Dorsolateral prefrontal cortex (tissue), 120 donors: ENCODE measurements at regions of chr7 and their contacts with region 1.

Region 1: DNA sequence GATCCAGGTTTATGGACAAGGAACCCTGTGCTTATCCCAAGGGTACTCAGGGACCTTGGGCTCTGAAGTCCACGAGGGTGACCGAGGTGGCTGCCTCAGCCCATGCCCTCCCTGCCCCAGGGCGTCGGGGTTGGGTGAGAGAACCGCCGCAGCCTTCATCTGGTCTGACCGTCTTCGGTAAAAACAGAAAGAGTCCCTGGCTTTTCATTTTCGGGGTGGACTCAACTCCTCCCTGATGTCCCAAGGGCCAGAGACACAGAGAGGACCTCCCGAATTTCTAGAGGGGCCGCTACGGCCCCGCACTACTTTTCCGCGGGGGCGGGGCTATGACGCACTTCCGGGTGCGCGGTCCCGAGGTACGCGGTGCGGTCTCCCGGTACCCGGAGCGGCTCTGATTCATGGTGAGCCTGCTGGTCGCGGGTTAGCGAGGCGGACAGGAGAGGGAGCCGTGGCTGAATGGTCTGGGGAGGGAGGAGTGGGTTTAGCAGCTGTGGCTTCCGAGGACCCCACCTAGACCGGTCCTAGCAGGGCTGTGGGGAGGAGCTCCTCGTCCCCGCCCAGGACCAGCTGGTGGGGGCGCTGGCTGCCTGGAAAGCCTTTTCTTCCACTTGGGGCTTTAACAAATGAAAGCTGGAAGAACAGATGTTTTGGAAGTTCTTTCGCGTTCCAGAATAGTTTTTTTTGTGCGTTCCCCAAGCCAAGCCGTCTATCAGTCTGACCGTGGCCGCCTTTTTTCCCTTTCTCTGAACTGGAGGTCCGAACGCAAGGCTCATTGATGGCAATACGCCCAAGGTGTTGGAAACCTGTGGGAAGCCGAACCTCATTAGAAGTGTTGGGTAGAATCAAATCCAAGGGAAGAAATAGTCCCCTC is at the start of gene ZSCAN21:
- DNase-seq: peak; percentile 79 to 92 (median 86)
- H3K4me3 ChIP-seq: peak within 1 kb of the TSS; percentile 58 to 99 (median 85)
- H3K27ac ChIP-seq: peak within 1 kb of the TSS; percentile 86 to 99 (median 97)
- H3K27me3 ChIP-seq: no peaks in the 10 kb centered on the region
- CTCF ChIP-seq: peak in 49 of 56 donors; percentile 20 to 70 (median 47)
- total RNA-seq, gene ZSCAN21: 8.2 to 18.7 (median 13.4) TPM

Region 2: DNA sequence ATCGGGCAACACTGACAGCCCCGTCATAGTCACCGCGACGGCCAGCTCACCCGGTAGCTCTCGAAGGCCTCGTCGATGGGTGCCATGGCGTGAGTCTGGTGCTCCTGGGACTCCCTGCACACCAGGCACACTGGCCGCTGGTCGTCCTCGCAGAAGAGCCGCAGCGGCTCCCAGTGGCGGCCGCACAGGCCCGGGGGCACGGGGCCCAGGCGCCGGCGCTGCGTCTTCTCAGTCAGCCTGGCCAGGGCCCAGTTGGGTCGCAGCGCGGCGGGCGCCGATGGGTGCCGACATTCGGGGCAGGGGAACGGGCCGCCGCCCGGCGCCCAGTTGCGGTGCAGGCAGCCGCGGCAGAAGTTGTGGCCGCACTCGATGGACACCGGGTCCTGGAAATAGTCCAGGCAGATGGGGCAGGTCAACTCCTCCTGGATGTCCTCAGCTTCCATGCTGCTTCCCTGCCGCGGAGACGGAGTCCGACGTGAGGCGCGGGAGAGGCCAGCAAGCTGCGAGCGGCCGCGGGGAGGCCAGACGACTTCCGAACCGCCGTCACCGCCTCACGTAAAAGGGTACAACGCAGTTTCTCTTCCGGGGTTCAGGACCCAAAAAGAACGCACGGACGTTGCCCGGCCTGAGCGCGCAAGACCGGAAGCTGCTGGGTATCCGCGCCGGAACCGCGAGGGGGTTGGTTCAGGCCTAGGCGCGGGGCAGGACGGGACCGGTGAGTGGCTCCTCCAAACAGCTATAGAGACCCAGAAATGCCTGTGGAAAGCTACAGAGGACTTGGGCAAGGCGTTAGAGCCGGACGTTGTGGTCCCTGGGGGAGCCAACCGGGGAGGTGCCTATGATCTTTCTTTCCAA is 130.5 kb before region 1 on chr7 and contains the start of gene TRIM4:
- intact Hi-C with region 1: loop called (anchors 5 to 10 kb)
- DNase-seq: peak; percentile 82 to 95 (median 88)
- H3K4me3 ChIP-seq: peak within 1 kb of the TSS; percentile 64 to 100 (median 93)
- H3K27ac ChIP-seq: peak within 1 kb of the TSS; percentile 26 to 93 (median 83)
- H3K27me3 ChIP-seq: no peaks in the 10 kb centered on the region
- CTCF ChIP-seq: peak in 35 of 56 donors; percentile 3 to 56 (median 29)
- total RNA-seq, gene TRIM4: 12.0 to 29.0 (median 18.5) TPM

Region 3: GRCh38 chr7:99971242-99971641 is 78.4 kb before region 1 on chr7:
- intact Hi-C with region 1: no loop called
- DNase-seq: no peak
- H3K4me3 ChIP-seq: no peak overlapping the region
- H3K27ac ChIP-seq: no peak overlapping the region
- H3K27me3 ChIP-seq: peaks cover 0 to 5% (median 0%) of the 10 kb centered on the region in 45 donors
- CTCF ChIP-seq: no peak

Region 4: GRCh38 chr7:99990460-99990852 is 59.2 kb before region 1 on chr7:
- intact Hi-C with region 1: loop called (anchors 1 to 5 kb)
- DNase-seq: peak in 1 of 10 donors; percentile 35
- H3K4me3 ChIP-seq: peak overlapping the region in 58 of 59 donors; percentile 19 to 69 (median 53)
- H3K27ac ChIP-seq: peak overlapping the region in 30 of 59 donors; percentile 2 to 82 (median 60)
- H3K27me3 ChIP-seq: no peaks in the 10 kb centered on the region
- CTCF ChIP-seq: no peak

Region 5: GRCh38 chr7:99997545-99998137 is 52.0 kb before region 1 on chr7:
- intact Hi-C with region 1: loop called (anchors 1 to 5 kb)
- DNase-seq: peak in 2 of 10 donors; percentile 62 to 70
- H3K4me3 ChIP-seq: peak overlapping the region; percentile 36 to 79 (median 60)
- H3K27ac ChIP-seq: peak overlapping the region; percentile 51 to 98 (median 90)
- H3K27me3 ChIP-seq: peaks cover 0 to 4% (median 0%) of the 10 kb centered on the region in 45 donors
- CTCF ChIP-seq: peak in 51 of 56 donors; percentile 18 to 68 (median 50)

Region 6: GRCh38 chr7:100015232-100016209 is 34.2 kb before region 1 on chr7 and contains the start of gene ZKSCAN1:
- intact Hi-C with region 1: loop called in 1 of 2 experiments (anchors 1 kb)
- DNase-seq: peak; percentile 84 to 93 (median 90)
- H3K4me3 ChIP-seq: peak within 1 kb of the TSS; percentile 65 to 100 (median 99)
- H3K27ac ChIP-seq: peak within 1 kb of the TSS; percentile 92 to 100 (median 99)
- H3K27me3 ChIP-seq: no peaks in the 10 kb centered on the region
- CTCF ChIP-seq: peak in 13 of 56 donors; percentile 7 to 40 (median 22)
- total RNA-seq, gene ZKSCAN1: 96.1 to 181 (median 132) TPM

Region 7: DNA sequence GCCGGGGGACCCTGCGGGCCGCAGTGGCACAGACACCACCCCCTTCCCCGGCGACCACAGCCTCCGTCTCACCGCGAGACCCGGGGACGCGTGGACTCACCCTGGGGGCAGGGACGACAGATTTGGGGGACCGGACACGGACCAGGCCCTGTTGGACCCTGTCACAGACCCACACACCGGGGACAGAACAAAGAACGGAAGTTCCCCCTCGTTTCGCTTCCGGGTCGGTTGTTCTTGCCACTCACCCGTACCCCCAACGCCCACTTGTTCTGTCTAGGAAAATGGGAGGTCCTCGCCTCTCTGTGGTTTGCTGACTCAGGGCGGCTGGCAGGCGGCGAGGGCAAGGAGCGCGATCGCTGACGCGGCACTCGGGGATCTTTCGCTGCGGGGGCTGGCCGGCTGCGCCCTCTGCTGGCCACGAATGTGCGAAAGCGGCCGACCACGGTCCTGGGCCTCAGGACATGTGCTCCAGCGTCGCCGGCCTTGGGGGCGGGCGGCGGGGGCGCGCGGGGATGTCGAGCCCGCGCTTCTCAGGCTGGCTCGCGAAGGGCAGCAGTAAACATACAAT is 31.9 kb after region 1 on chr7 and contains the start of gene ZNF3:
- intact Hi-C with region 1: loop called (anchors 5 kb)
- DNase-seq: peak; percentile 97 to 100 (median 99)
- H3K4me3 ChIP-seq: peak within 1 kb of the TSS; percentile 62 to 100 (median 97)
- H3K27ac ChIP-seq: peak within 1 kb of the TSS; percentile 28 to 97 (median 88)
- H3K27me3 ChIP-seq: no peaks in the 10 kb centered on the region
- CTCF ChIP-seq: peak; percentile 88 to 100 (median 98)
- total RNA-seq, gene ZNF3: 17.5 to 42.7 (median 26.8) TPM